ENCODE measurements at regions of chr7 and their contacts with region 1.

Region 1: GRCh38 chr7:101602484-101603241 is 26.4 kb downstream of the MYL10 start:
- DNase-seq: peak; percentile 88

Region 2: GRCh38 chr7:102248456-102249395 is 646.1 kb after region 1 on chr7:
- intact Hi-C with region 1: loop called (anchors 10 kb)
- DNase-seq: no peak

Region 3: GRCh38 chr7:102272075-102272917 is 669.6 kb after region 1 on chr7:
- intact Hi-C with region 1: loop called (anchors 5 kb)
- DNase-seq: peak; percentile 86

Measured in cardiac septum (tissue), 1 donor.